ENCODE measurements at regions of chr2 and their contacts with region 1.

Region 1: GRCh38 chr2:74364533-74365505 is 15.3 kb downstream of the DCTN1 start:
- DNase-seq: no peak
- H3K4me3 ChIP-seq: no peak overlapping the region
- H3K27ac ChIP-seq: no peak overlapping the region
- H3K4me1 ChIP-seq: no peaks in the 10 kb centered on the region
- H3K27me3 ChIP-seq: no peaks in the 10 kb centered on the region
- CTCF ChIP-seq: no peak
- POLR2A ChIP-seq: no peak

Region 2: GRCh38 chr2:73418343-73418742 is 946.5 kb before region 1 on chr2:
- intact Hi-C with region 1: loop called (anchors 5 kb)
- DNase-seq: peak in 1 of 2 donors; percentile 26
- H3K4me3 ChIP-seq: no peak overlapping the region
- H3K27ac ChIP-seq: no peak overlapping the region
- H3K4me1 ChIP-seq: no peaks in the 10 kb centered on the region
- H3K27me3 ChIP-seq: no peaks in the 10 kb centered on the region
- CTCF ChIP-seq: no peak
- POLR2A ChIP-seq: no peak

Region 3: DNA sequence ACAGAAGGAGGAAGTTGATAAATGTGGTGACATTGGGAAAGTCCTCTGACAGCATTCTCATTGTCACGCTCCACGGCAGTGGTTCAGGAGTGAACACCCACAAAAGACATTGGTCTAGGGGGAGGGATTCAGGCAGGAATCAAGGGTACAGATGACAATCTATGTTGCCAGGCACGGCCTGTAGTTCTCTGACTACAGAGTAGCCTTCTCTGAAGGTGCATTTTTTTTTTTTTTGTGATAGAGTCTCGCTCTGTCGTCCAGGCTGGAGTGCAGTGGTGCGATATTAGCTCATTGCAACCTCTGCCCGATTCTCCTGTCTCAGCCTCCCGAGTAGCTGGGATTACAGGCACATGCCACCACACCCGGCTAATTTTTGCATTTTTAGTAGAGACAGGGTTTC is 178.8 kb before region 1 on chr2:
- intact Hi-C with region 1: no loop called
- DNase-seq: no peak
- H3K4me3 ChIP-seq: no peak overlapping the region
- H3K27ac ChIP-seq: no peak overlapping the region
- H3K4me1 ChIP-seq: no peaks in the 10 kb centered on the region
- H3K27me3 ChIP-seq: no peaks in the 10 kb centered on the region
- CTCF ChIP-seq: no peak
- POLR2A ChIP-seq: no peak

Measured in breast epithelium (tissue), 4 donors.